ENCODE measurements at regions of chr14 and their contacts with region 1.

Region 1: DNA sequence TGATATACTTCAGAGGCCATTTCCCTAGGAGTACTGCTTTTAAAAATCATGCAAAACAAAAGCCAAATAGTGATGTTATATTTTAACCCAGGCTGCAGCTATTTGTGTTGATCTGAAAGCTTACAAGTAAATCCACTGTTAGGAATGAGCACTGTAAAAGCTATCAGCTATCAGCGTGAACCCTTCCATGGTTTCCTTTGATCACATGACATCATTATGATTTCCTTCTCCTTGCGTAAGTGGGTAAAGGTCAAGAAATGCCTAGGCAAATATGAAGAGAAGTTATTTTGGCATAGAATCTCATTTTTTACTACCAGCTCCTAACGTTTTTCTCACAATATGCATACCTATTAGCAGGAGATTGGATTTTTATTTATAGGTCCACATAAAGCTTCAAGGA is 48.6 kb upstream of the CATSPERB start:
- DNase-seq: no peak
- H3K4me3 ChIP-seq: no peak overlapping the region
- H3K4me3 Mint-ChIP-seq: no peak overlapping the region
- H3K27ac ChIP-seq: no peak overlapping the region
- H3K27ac Mint-ChIP-seq: no peak overlapping the region
- H3K4me1 ChIP-seq: no peaks in the 10 kb centered on the region
- H3K4me1 Mint-ChIP-seq: peaks cover 0 to 9% (median under 1%) of the 10 kb centered on the region in 4 donors
- H3K27me3 ChIP-seq: no peaks in the 10 kb centered on the region
- H3K27me3 Mint-ChIP-seq: no peaks in the 10 kb centered on the region

Region 2: GRCh38 chr14:91836119-91836881 is 55.8 kb after region 1 on chr14:
- CTCF ChIA-PET with region 1: no interaction called
- POLR2A ChIA-PET with region 1: interaction called, 10 read pairs
- intact Hi-C with region 1: no loop called
- DNase-seq: peak; percentile 80 to 90 (median 83)
- H3K4me3 ChIP-seq: peak overlapping the region; percentile 34 to 63
- H3K4me3 Mint-ChIP-seq: peak overlapping the region; percentile 84 to 92 (median 88)
- H3K27ac ChIP-seq: peak overlapping the region; percentile 68
- H3K27ac Mint-ChIP-seq: peak overlapping the region; percentile 81 to 95 (median 91)
- H3K4me1 ChIP-seq: peaks cover 72% of the 10 kb centered on the region
- H3K4me1 Mint-ChIP-seq: peaks cover 64 to 94% (median 77%) of the 10 kb centered on the region in 4 donors
- H3K27me3 ChIP-seq: no peaks in the 10 kb centered on the region
- H3K27me3 Mint-ChIP-seq: no peaks in the 10 kb centered on the region

Region 3: GRCh38 chr14:91977884-91978283 is 197.4 kb after region 1 on chr14:
- CTCF ChIA-PET with region 1: no interaction called
- POLR2A ChIA-PET with region 1: no interaction called
- intact Hi-C with region 1: loop called (anchors 10 kb)
- DNase-seq: no peak
- H3K4me3 ChIP-seq: no peak overlapping the region
- H3K4me3 Mint-ChIP-seq: no peak overlapping the region
- H3K27ac ChIP-seq: no peak overlapping the region
- H3K27ac Mint-ChIP-seq: peak overlapping the region in 3 of 7 donors; percentile 50 to 72 (median 57)
- H3K4me1 ChIP-seq: no peaks in the 10 kb centered on the region
- H3K4me1 Mint-ChIP-seq: peaks cover 4 to 7% (median 6%) of the 10 kb centered on the region in 4 donors
- H3K27me3 ChIP-seq: no peaks in the 10 kb centered on the region
- H3K27me3 Mint-ChIP-seq: no peaks in the 10 kb centered on the region